Right cardiac atrium (tissue), 5 donors: ENCODE measurements at regions of chr2 and their contacts with region 1.

Region 1: DNA sequence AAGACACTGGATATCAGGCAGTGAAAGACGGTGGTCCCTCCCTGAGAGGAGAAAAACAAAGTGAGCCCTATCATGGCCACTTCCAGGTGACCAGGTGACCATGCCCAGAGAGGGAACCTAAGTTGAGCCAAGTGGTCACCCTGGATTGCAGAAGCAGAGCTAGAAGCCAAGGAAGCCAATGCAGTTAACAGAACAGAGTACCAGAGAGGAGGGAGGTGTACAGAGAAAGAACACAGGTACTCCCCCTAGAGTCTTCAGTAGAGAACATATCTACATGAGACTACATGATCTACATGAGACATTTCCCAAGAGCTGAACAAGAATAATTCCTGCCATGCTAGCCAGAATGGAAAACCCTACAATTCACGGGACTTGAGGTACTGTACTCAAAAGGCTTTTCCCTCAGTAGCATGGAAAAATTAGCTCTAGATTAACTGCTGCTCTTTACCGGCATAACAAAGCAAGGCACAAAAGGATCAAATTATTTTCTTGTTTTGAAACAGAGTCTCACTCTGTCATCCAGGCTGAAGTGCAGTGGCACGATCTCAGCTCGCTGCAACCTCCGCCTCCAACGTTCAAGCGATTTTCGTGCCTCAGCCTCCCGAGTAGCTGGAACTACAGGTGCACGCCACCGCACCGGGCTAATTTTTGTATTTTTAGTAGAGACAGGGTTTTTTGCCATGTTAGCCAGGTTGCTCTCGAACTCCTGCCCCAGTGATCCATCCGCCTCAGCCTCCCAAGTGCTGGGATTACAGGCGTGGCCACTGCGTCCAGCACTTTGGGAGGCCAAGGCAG is 23.5 kb downstream of the ROCK2 start:
- DNase-seq: no peak
- ATAC-seq: peak in 1 of 2 donors; percentile 28
- H3K4me3 ChIP-seq: no peak overlapping the region
- H3K27ac ChIP-seq: no peak overlapping the region
- H3K4me1 ChIP-seq: no peaks in the 10 kb centered on the region
- H3K27me3 ChIP-seq: no peaks in the 10 kb centered on the region

Region 2: DNA sequence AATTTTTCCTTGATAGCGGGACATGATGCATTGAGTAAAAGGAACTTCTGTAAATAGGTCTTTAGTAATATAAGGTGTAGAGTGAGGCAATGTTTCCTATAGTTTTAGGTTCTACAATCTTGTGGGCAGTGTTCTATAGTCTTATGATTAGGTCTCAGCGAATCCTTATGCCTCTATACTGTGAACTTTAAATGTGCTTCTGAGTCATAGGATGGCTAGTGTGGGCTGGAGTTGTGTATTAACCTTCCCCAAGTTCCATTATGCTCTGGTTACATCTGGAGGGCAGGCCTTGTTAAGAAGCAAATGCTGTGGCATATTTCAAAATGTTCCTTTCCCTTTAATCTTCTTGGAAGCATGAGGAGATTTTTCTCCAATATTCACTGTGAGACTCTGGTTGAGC is 50.0 kb before region 1 on chr2:
- intact Hi-C with region 1: loop called in 2 of 4 experiments (anchors 10 kb)
- DNase-seq: no peak
- ATAC-seq: no peak
- H3K4me3 ChIP-seq: no peak overlapping the region
- H3K27ac ChIP-seq: no peak overlapping the region
- H3K4me1 ChIP-seq: peaks cover 2% of the 10 kb centered on the region
- H3K27me3 ChIP-seq: no peaks in the 10 kb centered on the region